ENCODE measurements at regions of chr1 and their contacts with region 1.

Region 1: DNA sequence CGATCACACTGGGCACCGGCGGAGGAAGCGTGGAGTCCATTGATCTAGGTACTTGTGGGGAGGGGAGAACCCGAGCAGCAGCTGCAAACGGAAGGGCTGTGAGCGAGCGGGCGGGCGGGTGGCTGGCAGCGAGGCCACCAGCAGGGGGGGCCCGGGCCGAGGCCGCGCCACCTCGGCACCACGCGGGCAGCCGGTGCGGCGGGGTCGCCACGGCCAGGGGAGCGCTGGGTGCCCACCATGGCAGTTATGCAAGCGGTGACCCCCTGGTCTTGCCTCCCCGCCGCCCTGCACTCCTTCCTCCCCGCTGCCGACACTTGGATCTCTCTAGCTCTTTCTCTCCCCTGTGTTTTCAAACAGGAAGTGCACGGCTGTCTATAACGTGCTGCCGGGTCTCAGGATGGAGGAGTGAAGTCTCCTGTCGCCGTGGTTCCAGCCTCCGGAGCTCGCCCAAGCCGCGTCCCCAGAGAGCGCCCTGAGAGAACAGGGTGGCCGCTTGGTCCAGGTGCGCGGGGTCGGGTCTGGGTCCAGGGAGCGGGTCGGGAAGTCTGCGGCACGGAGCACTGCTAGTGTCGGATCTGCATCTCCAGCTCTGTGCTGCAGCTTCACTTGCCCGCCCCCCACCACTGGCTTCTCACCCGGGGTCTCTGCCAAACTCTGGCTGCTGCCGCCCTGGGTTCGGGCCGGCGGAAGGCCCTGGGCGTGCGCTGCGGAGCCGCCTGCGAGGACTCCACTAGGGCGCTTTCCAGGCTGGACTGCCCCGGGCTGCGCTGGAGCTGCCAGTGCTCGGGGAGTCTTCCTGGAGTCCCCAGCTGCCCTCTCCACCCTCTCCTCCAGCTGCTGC is 22.7 kb downstream of the LRRC8D start:
- DNase-seq: peak; percentile 86
- H3K4me3 Mint-ChIP-seq: peak overlapping the region; percentile 91
- H3K27ac Mint-ChIP-seq: peak overlapping the region; percentile 94
- H3K4me1 Mint-ChIP-seq: peaks cover 47% of the 10 kb centered on the region
- H3K27me3 Mint-ChIP-seq: no peaks in the 10 kb centered on the region

Region 2: DNA sequence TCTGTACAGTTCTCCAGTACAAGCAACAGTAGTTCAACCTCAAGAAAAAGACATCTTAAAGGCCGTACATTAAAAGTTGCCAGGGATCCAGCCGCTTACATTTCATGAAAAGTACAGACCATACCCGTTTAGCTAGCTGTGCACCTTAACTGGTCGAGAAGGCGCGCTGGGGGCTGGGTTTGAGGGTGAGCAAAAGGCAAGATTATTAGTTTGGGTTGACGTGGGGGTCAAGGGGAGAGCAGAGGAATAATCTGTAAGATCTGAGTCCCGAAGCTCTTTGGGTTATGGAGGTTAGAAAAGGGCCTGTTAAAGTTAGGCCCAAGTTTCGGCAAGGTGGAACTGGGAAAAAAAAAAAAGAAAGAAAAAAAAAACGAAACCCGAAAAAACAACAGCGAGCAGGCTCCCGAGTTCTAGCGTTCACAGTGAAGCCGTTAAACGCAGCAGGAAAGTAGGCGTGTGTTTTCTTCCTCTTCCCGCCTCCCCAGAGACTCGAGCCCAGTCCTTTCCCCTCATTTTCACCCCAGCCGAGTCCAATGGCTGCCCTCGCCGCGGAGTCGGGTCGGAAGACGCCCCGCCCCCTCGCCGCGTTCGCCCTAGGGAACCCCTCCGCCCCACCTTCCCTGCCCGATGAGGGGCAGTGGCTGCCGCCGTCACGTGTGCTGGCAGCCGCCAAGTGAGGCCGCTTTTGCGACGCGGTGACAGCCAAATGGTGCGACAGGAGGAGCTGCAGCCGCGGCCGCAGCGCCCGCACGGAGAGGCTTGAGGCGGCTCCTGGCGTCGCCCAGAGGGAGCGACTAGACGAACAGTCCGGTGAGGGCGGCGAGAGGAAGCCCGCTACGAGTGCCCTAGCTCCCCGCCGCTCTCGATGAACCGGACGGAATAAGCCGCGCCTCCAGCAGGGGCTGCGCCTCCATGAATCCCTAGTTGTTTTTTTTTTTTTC is 1159.7 kb before region 1 on chr1 and contains the start of gene PKN2:
- CTCF ChIA-PET with region 1: no interaction called
- intact Hi-C with region 1: loop called (anchors 10 kb)
- DNase-seq: peak; percentile 98
- H3K4me3 Mint-ChIP-seq: peak within 1 kb of the TSS; percentile 97
- H3K27ac Mint-ChIP-seq: peak within 1 kb of the TSS; percentile 93
- H3K4me1 Mint-ChIP-seq: peaks cover 31% of the 10 kb centered on the region
- H3K27me3 Mint-ChIP-seq: no peaks in the 10 kb centered on the region
- total RNA-seq, gene PKN2: 17.2 to 17.9 TPM

Region 3: GRCh38 chr1:89605692-89606091 is 237.8 kb before region 1 on chr1:
- CTCF ChIA-PET with region 1: no interaction called
- intact Hi-C with region 1: loop called (anchors 2 kb)
- DNase-seq: no peak
- H3K4me3 Mint-ChIP-seq: no peak overlapping the region
- H3K27ac Mint-ChIP-seq: no peak overlapping the region
- H3K4me1 Mint-ChIP-seq: peaks cover 95% of the 10 kb centered on the region
- H3K27me3 Mint-ChIP-seq: no peaks in the 10 kb centered on the region

Region 4: GRCh38 chr1:89820422-89821321 is 22.8 kb before region 1 on chr1 and contains the start of gene LRRC8D:
- CTCF ChIA-PET with region 1: interaction called, 6 read pairs
- intact Hi-C with region 1: loop called (anchors 1 kb)
- DNase-seq: peak; percentile 81
- H3K4me3 Mint-ChIP-seq: peak within 1 kb of the TSS; percentile 85
- H3K27ac Mint-ChIP-seq: peak within 1 kb of the TSS; percentile 26
- H3K4me1 Mint-ChIP-seq: peaks cover 34% of the 10 kb centered on the region
- H3K27me3 Mint-ChIP-seq: no peaks in the 10 kb centered on the region
- total RNA-seq, gene LRRC8D: 14.4 to 15.0 TPM

Region 5: GRCh38 chr1:89908672-89909436 is 65.4 kb after region 1 on chr1:
- CTCF ChIA-PET with region 1: interaction called, 5 read pairs
- intact Hi-C with region 1: loop called (anchors 1 kb)
- DNase-seq: peak; percentile 25
- H3K4me3 Mint-ChIP-seq: no peak overlapping the region
- H3K27ac Mint-ChIP-seq: peak overlapping the region; percentile 71
- H3K4me1 Mint-ChIP-seq: peaks cover 47% of the 10 kb centered on the region
- H3K27me3 Mint-ChIP-seq: no peaks in the 10 kb centered on the region

Region 6: DNA sequence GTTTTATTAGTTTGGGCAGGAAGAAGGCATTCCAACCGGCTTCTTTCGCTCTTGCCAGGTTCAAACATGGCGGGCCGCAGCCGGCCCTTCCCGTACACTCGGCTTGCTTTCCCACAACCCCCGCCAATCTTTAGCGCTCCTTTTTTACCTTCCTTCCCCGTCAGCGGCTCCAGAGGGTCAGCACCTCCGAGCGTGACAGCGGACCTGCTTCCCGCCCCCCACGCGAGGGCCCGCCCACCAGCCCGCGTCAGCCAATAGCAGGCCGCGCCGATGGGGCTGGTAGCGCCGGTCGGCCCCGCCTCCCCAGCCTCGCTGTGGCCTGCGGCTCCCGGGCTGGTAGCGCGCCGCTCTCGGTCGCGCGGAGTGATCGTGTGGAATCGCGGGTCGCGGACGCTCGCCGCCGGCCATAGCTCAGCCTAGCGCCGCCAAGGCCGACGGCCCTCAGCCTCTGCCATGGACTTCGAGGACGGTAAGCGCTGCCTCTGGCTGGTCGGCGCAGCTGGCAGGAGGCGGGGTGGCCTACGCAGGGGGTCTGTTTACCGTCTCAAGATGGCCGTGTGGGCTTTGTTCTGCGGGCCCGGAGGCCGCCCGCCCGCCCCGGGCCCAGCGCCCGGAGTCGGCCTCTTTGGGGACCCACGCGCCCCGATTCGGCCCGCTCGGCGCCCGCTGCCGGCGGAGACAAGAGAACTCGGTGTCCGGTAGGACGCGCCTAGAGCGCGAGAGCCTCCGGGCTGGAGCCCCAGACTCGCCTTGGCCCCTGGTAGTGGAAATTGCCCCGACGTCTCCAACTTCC is 151.5 kb after region 1 on chr1 and contains the start of gene ZNF326:
- CTCF ChIA-PET with region 1: no interaction called
- intact Hi-C with region 1: loop called (anchors 1 kb)
- DNase-seq: peak; percentile 94
- H3K4me3 Mint-ChIP-seq: peak within 1 kb of the TSS; percentile 96
- H3K27ac Mint-ChIP-seq: peak within 1 kb of the TSS; percentile 90
- H3K4me1 Mint-ChIP-seq: peaks cover 42% of the 10 kb centered on the region
- H3K27me3 Mint-ChIP-seq: no peaks in the 10 kb centered on the region
- total RNA-seq, gene ZNF326: 17.4 to 17.9 TPM